ENCODE measurements at regions of chr20 and their contacts with region 1.

Region 1: DNA sequence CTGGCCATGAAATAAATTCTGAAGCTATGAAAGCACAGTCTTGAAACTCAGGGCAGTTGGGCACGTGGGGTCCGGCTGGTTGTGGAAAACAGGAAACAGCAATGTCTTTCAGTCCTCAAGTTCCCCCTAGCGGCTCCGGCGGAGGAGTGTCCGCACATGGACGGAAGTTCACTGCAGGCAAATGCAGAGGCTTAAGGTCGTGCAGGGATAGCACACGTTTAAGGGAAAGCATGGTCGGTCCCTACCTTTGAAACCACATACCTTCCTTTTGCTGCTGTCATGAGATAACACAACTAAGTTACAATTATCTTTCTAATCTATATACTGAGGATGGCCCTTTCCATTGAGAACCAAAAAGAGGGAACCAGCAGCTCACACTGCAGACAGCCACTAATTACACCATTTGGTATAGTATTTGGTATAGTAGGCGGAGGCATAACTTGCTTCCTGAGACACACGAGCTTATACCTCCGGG is 52.6 kb upstream of the NFATC2 start:
- DNase-seq: peak; percentile 84
- CTCF ChIP-seq: peak; percentile 92

Region 2: GRCh38 chr20:50987592-50988210 is 607.4 kb before region 1 on chr20:
- CTCF ChIA-PET with region 1: interaction called, 10 read pairs
- POLR2A ChIA-PET with region 1: no interaction called
- DNase-seq: peak; percentile 74
- CTCF ChIP-seq: peak; percentile 79

Region 3: DNA sequence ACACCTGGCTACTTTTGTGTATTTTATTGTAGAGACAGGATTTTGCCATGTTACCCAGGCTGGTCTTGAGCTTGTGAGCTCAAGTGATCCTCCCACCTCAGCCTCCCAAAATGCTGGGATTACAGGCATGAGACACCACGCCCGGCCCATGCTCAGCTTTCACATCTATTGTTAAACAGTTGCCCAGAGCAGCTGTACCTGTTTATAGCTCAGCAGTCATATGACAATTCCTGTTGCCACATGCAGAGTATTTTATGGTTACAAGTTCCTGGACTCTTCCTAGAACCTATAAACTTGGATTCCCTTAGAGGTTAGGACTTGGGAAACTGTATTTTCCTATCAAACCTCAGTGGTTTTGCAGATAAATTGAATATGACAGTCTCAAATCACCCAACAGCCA is 383.9 kb before region 1 on chr20:
- CTCF ChIA-PET with region 1: no interaction called
- POLR2A ChIA-PET with region 1: no interaction called
- DNase-seq: no peak
- CTCF ChIP-seq: no peak

Region 4: DNA sequence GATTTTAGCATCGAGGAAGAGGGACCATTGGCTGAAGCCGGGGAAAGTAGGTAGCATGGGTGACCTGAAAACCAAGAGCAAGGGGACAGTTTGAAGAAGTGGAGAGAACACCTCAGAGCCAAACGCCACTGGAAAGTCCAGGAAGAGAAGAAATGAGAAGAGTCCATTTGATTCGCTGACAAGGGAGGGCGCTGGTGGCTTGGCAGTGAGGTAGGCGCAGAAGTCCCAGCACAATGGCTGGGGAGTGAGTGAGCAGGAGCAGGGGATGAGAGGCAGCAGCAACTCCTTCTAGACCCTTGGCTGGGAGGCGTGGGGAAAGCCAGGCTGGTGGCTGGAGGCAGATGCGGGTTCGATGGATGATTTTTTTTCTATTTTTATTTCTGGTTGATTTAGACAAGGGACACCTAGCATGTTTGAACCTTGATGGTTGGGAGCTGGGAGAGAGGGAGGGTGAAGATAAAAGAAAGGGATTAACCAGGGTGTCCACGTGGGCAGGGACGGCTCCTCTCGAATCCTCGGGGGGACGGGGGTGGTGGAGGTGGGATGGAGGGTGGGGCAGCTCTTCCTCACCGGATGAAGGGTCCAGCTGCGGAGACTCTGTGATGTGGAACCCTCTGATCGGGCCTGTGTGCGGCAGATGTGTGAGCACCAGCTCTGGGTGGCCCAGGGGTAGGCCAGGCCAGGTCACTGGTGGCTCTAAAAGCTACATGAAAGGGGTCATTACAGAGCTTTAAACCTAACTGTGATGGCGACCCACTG is 216.7 kb before region 1 on chr20:
- CTCF ChIA-PET with region 1: interaction called, 42 read pairs
- POLR2A ChIA-PET with region 1: no interaction called
- DNase-seq: no peak
- CTCF ChIP-seq: peak; percentile 5

Region 5: DNA sequence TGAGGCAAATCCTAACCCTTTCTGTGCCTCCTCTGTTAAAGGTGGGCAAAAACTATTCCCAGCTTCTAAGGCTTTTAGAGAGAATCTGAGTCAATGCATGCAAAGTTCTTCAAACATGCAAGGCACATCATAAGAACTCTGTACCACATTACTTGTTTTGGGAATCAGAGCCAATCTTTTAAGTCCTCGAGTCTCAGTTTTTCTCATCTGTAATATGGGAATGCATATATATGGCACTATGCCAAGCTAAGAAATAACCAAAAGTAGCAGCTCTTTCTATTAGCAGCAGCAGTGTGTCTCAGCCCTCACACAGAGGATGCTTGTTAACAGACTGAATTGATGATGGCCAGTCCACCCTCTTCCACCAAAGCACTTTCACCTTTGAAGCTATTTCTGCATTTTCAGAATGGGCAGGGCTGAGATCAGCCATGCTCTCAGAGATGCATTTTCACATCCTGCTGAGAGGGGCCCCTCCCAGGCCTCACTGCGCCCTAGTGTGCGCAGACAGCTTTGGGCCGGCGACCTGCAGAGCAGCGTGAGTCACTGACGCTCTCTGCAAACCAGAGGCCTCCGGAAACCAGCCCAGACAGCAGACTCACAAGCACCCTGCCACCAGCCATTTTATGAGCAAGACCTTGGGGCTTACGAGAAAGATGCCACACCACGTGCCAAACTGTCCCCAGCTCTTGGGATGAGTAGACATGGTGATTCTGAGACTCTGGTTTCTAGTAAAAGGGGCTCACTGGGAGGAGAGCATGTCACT is 190.6 kb before region 1 on chr20:
- CTCF ChIA-PET with region 1: interaction called, 14 read pairs
- POLR2A ChIA-PET with region 1: no interaction called
- DNase-seq: peak; percentile 89
- CTCF ChIP-seq: no peak

Region 6: DNA sequence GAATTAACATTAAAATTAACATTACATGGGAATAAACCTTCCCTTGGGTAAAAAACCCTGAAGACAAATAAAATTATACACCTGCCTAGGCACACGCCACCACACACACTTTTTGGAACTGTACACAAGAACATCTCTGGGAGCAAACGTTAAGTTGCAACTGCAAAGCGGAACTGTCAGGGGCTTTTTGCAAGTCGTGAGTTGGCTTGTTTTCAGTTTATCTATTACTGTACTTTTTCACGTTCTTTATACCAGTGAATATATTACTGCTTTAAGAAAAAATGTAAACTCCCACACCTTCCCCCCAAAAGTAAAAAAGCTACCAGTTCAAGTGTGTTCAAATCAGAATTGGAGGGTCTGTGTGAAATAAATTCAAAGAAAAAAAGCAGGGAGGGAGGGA is 13.0 kb after region 1 on chr20:
- CTCF ChIA-PET with region 1: interaction called, 30 read pairs
- POLR2A ChIA-PET with region 1: no interaction called
- DNase-seq: peak; percentile 43
- CTCF ChIP-seq: no peak